ENCODE measurements at regions of chr1 and their contacts with region 1.

Region 1: DNA sequence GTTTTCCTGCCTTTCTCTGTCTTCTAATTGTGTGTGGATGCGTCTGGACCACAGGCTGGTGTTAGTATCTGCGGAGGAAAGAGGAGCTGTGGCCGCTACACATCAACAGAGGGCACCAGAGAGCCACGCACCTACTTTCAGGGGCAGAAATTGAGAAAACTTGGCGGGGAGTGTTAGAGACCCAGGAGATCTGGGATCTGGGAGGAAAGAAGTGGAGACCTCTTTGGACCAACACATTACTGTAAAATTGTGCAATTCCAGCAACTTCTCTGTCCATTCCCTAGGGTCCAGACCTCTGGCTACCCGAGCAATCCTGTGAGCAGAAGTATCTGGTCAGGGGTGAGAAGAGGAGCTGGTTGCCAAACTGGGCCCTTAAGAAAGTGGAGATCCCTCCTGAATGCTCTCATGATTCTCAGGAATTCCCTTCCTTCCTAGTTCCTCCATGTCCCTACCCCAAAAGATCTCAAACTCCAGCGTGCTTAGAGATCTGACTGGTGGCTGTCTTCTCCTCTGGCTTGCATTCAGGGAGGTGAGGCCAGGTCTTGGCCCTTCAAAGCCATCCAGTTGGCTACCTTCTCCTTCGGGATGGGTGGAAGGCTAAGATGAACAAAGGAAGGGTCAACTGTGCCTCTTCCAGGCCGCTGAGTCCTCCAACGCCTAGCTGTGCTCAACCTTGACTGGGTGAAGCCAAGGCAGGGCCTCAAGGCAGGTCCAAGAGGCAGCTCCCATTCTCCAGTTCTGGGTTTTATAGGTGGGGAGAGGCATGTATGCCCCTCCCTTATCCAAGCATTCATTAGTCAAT is 1.2 kb upstream of the KIRREL1 start:
- DNase-seq: no peak
- ATAC-seq: peak; percentile 83
- H3K4me3 ChIP-seq: no peak overlapping the region
- H3K27ac ChIP-seq: no peak overlapping the region
- H3K4me1 ChIP-seq: no peaks in the 10 kb centered on the region
- H3K27me3 ChIP-seq: peaks cover 6 to 18% of the 10 kb centered on the region in 2 experiments; a peak in 3 of 4 replicates
- CTCF ChIP-seq: peak; percentile 77 to 90 (median 84)
- EP300 ChIP-seq: no peak
- POLR2A ChIP-seq: no peak
- RAD21 ChIP-seq: peak; percentile 75

Region 2: GRCh38 chr1:157893681-157894080 is 98.6 kb before region 1 on chr1:
- CTCF ChIA-PET with region 1: no interaction called
- POLR2A ChIA-PET with region 1: no interaction called
- RAD21 ChIA-PET with region 1: no interaction called
- SMC1A ChIA-PET with region 1: no interaction called
- in situ Hi-C with region 1: no loop called
- intact Hi-C with region 1: no loop called
- DNase-seq: no peak
- ATAC-seq: no peak
- H3K4me3 ChIP-seq: no peak overlapping the region
- H3K27ac ChIP-seq: no peak overlapping the region
- H3K4me1 ChIP-seq: no peaks in the 10 kb centered on the region
- H3K27me3 ChIP-seq: no peaks in the 10 kb centered on the region
- CTCF ChIP-seq: no peak
- EP300 ChIP-seq: no peak
- POLR2A ChIP-seq: no peak
- RAD21 ChIP-seq: no peak

Region 3: DNA sequence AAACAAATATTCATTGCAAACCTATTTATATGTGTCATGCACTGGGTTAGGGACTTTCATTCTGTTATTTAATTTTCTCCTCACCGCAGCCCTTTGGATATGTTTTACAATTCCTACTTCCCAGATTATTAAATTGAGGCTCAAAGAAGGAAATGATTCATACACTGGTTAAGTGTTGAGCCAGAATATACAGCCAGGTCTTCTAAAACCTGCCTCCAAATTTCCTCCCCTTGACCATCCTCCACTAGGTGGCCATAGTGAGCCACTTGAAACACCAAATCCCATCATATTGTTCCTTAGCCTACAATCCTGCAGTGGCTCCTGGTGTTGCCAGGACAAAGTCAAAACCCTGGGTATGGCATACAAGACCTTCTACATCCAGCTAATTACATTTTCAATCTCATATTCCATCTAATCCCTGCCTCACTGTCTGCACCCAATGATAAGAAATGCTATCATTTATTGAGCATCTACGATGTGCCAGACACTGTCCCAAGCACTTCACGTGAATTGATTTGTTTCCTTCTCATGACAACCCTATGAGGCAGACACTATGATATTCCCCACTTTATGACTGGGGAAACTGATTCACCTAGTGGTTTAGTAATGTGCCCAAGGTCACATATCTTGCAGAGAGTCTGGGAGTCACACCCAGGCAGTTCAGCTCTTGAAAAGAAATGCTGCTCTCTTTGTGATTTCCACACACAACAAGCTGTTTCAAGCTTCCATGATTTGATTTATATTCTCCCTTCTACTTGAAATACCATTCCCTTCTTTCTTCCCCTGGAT is 22.3 kb before region 1 on chr1:
- CTCF ChIA-PET with region 1: interaction called, 20 read pairs
- POLR2A ChIA-PET with region 1: no interaction called
- RAD21 ChIA-PET with region 1: no interaction called
- SMC1A ChIA-PET with region 1: interaction called, 3 read pairs
- in situ Hi-C with region 1: no loop called
- intact Hi-C with region 1: no loop called
- DNase-seq: no peak
- ATAC-seq: 0 out of 3 replicates have a peak, but pooled peaks have one; percentile 29
- H3K4me3 ChIP-seq: no peak overlapping the region
- H3K27ac ChIP-seq: no peak overlapping the region
- H3K4me1 ChIP-seq: no peaks in the 10 kb centered on the region
- H3K27me3 ChIP-seq: peaks cover 0 to 12% of the 10 kb centered on the region in 2 experiments; a peak in 2 of 4 replicates
- CTCF ChIP-seq: peak; percentile 46 to 77 (median 62)
- EP300 ChIP-seq: no peak
- POLR2A ChIP-seq: no peak
- RAD21 ChIP-seq: 0 out of 2 replicates have a peak, but pooled peaks have one; percentile 27

Region 4: GRCh38 chr1:157982136-157982535 is 10.1 kb before region 1 on chr1:
- CTCF ChIA-PET with region 1: interaction called, 11 read pairs
- POLR2A ChIA-PET with region 1: no interaction called
- RAD21 ChIA-PET with region 1: no interaction called
- SMC1A ChIA-PET with region 1: no interaction called
- in situ Hi-C with region 1: no loop called
- intact Hi-C with region 1: no loop called
- DNase-seq: no peak
- ATAC-seq: no peak
- H3K4me3 ChIP-seq: no peak overlapping the region
- H3K27ac ChIP-seq: no peak overlapping the region
- H3K4me1 ChIP-seq: no peaks in the 10 kb centered on the region
- H3K27me3 ChIP-seq: peaks cover 2 to 3% of the 10 kb centered on the region in 2 experiments; a peak in 2 of 4 replicates
- CTCF ChIP-seq: no peak
- EP300 ChIP-seq: no peak
- POLR2A ChIP-seq: no peak
- RAD21 ChIP-seq: no peak

Region 5: DNA sequence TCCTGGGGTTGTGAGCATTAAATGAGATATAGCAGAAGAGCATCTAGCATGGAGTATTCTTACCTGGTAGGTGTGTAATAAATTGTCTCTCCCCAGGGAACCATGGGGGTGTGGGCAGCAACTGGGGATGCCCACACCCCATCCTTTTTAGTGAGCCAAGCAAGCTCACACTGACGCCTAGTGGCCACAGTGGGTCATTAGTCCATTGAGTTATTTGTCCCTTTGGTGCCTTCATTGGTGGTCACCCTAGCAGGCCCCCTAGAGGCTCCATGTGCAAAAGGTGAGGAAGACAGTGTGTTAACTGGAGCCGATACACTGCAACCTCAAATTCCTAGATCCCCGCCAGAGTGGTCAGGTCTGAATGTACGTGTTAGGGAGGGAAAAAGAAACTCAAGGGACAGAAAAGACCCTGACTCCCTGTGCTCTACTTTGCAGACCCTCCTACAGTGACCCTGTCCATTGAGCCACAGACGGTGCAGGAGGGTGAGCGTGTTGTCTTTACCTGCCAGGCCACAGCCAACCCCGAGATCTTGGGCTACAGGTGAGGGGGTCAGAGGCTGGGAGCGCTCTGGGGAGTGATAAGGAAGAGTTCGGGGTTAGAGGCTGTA is 95.2 kb after region 1 on chr1:
- CTCF ChIA-PET with region 1: interaction called, 4 read pairs
- POLR2A ChIA-PET with region 1: no interaction called
- RAD21 ChIA-PET with region 1: interaction called, 4 read pairs
- SMC1A ChIA-PET with region 1: no interaction called
- in situ Hi-C with region 1: no loop called
- intact Hi-C with region 1: loop called (anchors 5 kb)
- DNase-seq: no peak
- ATAC-seq: peak; percentile 94
- H3K4me3 ChIP-seq: no peak overlapping the region
- H3K27ac ChIP-seq: no peak overlapping the region
- H3K4me1 ChIP-seq: no peaks in the 10 kb centered on the region
- H3K27me3 ChIP-seq: peaks cover 0 to 2% of the 10 kb centered on the region in 2 experiments; a peak in 2 of 4 replicates
- CTCF ChIP-seq: peak; percentile 64 to 93 (median 86)
- EP300 ChIP-seq: no peak
- POLR2A ChIP-seq: no peak
- RAD21 ChIP-seq: peak; percentile 56

Region 6: DNA sequence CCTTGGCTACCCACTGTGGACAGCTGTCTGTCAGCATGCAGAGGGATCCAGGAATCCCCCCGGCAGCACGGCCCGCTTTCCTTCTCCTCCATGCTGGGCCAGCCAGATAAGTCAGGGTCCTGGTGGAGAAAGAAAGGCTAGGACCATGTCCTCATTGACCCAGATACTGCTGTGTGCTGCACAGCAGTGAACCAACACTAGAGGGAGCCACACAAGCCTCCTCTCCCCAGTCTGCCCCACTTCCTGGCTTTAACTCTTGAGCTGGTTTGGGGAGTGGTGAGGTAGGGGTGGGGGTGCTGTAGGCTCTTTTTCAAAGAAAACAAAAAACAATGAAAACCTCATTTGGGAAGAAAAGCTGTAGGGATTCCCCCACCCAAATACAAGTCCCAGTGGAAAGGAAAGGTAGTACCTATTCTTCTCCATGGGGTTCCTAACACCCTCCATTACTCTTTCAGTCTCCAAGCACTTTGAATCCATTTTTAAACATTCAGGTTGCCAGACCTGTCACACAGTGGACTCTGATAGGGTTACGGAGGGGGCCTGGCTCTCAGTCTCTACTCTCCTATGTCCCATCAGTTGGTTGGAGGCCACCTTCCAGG is 103.6 kb after region 1 on chr1:
- CTCF ChIA-PET with region 1: interaction called, 11 read pairs
- POLR2A ChIA-PET with region 1: no interaction called
- RAD21 ChIA-PET with region 1: no interaction called
- SMC1A ChIA-PET with region 1: no interaction called
- in situ Hi-C with region 1: no loop called
- intact Hi-C with region 1: no loop called
- DNase-seq: no peak
- ATAC-seq: peak; percentile 96
- H3K4me3 ChIP-seq: no peak overlapping the region
- H3K27ac ChIP-seq: no peak overlapping the region
- H3K4me1 ChIP-seq: no peaks in the 10 kb centered on the region
- H3K27me3 ChIP-seq: peaks cover 0 to 4% of the 10 kb centered on the region in 2 experiments; a peak in 3 of 4 replicates
- CTCF ChIP-seq: peak; percentile 52 to 81 (median 76)
- EP300 ChIP-seq: no peak
- POLR2A ChIP-seq: no peak
- RAD21 ChIP-seq: peak; percentile 57